Activated CD4-positive, alpha-beta T cell treated with anti-CD3 and anti-CD28 coated beads, Interleukin-2, amount 10 ng/mL, durations not matched to agents 24 days and 14 days (primary cell): ENCODE measurements at regions of chr19 and their contacts with region 1.

Region 1: GRCh38 chr19:58572818-58573657 is at the start of gene MZF1:
- DNase-seq: peak; percentile 100
- H3K4me3 Mint-ChIP-seq: peak within 1 kb of the TSS; percentile 95
- H3K27ac Mint-ChIP-seq: peak within 1 kb of the TSS; percentile 99
- H3K4me1 Mint-ChIP-seq: peaks cover 37% of the 10 kb centered on the region
- H3K27me3 Mint-ChIP-seq: peaks cover 3% of the 10 kb centered on the region
- total RNA-seq, gene MZF1: 21.6 and 23.7 TPM in 2 replicates

Region 2: DNA sequence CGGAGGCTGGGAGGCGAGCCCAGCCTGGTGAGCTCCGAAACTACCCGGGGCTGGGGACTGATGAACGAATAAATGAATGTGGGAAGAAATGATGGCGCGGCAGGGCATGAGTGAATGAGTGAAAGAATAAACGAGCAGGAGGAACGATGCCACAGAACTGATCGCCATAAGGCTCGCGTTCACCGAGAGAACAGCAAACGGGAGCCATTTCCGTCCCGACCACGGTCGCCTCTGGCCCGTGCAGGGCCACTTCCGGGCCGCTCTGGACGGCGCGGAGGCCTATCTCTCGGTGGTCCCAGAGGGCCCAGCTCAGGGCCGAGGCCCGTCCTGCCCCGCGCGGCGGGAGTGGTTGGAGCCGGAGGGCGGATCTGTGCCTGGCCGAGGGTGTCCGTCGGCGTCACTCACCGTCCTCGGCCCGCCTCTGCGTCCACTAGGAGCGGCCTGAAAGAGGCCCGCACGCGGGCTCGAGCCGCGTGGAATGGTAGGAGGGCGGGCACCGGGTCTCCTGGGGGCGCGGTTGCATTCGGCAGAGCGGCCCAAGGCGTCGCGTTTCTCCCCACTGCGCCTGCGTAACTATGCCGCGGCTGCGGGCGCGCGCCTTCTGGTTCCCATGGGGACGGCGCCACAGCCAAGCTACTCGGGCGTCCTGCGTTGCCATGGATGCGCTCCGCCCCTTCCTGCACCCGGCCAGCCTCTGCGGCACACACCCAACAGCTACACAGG is 210.6 kb before region 1 on chr19 and contains the start of gene ZNF497:
- intact Hi-C with region 1: no loop called
- DNase-seq: peak; percentile 99
- H3K4me3 Mint-ChIP-seq: peak within 1 kb of the TSS; percentile 95
- H3K27ac Mint-ChIP-seq: peak within 1 kb of the TSS; percentile 97
- H3K4me1 Mint-ChIP-seq: peaks cover 9% of the 10 kb centered on the region
- H3K27me3 Mint-ChIP-seq: no peaks in the 10 kb centered on the region
- total RNA-seq, gene ZNF497: 0.79 and 1.1 TPM in 2 replicates

Region 3: DNA sequence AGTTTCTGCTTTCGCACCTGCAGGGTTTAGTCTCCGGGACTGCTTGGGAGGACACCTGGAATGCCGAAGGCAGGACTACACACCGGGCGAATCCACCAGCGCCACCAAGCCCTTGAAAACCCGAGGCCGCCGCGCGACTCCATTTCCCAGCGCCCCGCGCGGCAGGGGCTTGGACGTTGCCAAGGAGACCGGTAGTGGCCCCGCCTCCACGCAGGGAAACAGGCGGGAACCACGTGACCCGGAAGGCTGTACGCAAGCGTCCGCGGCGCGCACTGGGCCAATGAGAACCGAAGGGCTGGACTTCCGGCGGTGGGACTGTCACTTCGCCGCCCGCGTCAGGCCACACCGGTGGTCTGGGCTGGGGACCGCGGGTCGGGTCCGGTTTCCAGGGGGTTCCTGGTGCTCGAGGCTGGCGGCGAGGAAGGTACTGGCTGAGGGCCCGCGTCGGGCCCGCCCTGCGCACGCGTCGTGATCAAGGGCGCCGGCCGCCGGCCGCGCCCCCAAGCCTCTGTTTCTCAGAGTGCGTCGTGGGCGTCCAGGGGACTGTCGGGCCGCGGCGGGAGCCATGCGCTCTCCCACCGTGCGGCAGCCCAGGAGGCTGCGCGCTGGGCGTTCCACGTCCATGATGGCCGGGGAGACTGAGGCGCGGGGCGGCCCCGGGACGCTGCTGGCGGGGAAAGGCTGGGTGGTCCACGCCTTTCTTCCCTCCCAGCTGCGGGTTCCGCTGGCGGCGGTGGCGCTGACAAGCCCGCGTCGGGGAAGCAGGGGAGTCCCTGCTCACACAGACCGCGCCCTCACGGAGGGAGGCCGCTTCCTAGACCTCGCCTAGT is 106.1 kb before region 1 on chr19 and contains the start of gene ZNF324:
- intact Hi-C with region 1: loop called (anchors 1 kb)
- DNase-seq: peak; percentile 100
- H3K4me3 Mint-ChIP-seq: peak within 1 kb of the TSS; percentile 89
- H3K27ac Mint-ChIP-seq: peak within 1 kb of the TSS; percentile 84
- H3K4me1 Mint-ChIP-seq: peaks cover 15% of the 10 kb centered on the region
- H3K27me3 Mint-ChIP-seq: peaks cover 2% of the 10 kb centered on the region
- total RNA-seq, gene ZNF324: 13.6 and 14.7 TPM in 2 replicates

Region 4: DNA sequence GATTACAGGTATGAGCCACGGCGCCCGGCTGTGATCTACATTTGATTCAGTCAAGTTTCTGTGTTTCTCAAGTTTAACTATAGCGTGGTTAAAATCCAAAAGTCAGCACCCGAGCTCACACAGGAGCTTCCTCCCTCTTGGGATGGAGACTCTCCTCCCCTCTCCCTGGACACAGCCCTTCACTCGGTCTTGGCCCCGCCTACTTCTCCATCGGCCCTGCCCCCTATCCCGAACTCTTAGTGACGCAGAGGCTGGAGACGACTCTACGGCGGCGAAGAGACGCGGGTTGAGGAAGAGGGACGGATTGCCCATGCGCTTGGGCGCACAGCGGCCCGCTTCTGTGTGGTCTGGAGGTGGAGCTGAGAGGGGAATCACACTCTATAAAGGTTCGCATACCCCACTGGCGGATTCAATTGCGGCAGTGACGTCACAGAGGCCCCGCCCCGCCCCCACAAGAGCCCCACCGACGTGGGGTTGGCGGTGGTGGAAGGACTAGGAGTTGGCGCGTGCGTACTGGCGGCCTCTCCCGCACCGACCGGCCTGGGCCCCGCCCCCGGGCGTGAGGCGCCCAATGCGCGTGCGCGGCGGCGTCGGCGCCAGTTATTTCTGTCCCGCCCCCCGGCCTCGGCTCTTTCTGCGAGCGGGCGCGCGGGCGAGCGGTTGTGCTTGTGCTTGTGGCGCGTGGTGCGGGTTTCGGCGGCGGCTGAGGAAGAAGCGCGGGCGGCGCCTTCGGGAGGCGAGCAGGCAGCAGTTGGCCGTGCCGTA is 29.0 kb before region 1 on chr19 and contains the start of gene TRIM28:
- intact Hi-C with region 1: loop called (anchors 1 kb)
- DNase-seq: peak; percentile 100
- H3K4me3 Mint-ChIP-seq: peak within 1 kb of the TSS; percentile 94
- H3K27ac Mint-ChIP-seq: peak within 1 kb of the TSS; percentile 99
- H3K4me1 Mint-ChIP-seq: peaks cover 29% of the 10 kb centered on the region
- H3K27me3 Mint-ChIP-seq: peaks cover 23% of the 10 kb centered on the region
- total RNA-seq, gene TRIM28: 689 and 698 TPM in 2 replicates